BJ (cell line): ENCODE measurements at regions of chr3 and their contacts with region 1.

Region 1: DNA sequence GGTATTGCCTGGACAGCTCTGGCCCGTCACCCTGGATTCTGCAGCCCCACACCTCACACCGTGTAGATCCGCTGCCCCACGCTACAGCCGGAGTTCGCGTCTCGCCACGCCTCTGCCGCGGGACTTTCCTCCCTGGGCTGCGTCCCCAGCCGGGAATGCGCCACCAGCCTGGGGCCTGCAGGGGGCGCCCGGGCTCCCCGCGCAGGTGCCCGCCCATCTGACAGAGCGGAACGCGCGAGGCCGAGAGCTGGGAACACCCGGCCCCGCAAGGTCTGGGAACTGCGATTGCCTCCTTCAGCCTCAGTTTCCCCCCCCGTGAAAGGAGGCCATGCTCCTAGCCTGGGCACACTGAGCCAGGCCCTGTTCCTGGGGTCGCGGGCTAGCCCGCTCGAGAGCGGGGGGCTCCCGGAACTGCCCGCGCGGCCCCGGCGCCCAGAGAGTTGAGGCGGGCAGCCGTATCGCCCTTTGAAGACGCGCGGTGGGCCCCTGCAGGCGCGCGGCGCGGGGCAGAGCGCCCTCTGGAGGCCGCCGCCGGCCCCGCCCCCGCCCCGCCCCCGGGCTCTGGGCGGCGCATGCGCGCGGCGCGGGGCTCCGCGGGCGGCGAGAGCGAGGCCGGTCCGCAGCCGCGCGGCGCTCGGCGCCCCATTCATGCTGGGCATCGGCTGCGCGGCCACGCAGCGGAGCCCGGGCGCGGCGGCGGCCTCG is at the start of gene PLXNA1:
- DNase-seq: no peak
- H3K4me3 ChIP-seq: peak within 1 kb of the TSS; percentile 83
- H3K27me3 ChIP-seq: no peaks in the 10 kb centered on the region
- CTCF ChIP-seq: peak; percentile 92
- polyA plus RNA-seq, gene PLXNA1: 34.7 and 57.2 TPM in 2 replicates

Region 2: GRCh38 chr3:126746395-126747177 is 236.0 kb before region 1 on chr3:
- CTCF ChIA-PET with region 1: interaction called, 81 read pairs
- POLR2A ChIA-PET with region 1: no interaction called
- DNase-seq: peak; percentile 7
- H3K4me3 ChIP-seq: no peak overlapping the region
- H3K27me3 ChIP-seq: no peaks in the 10 kb centered on the region
- CTCF ChIP-seq: peak; percentile 24; the same call in 1 of the 2 replicates

Region 3: GRCh38 chr3:126971891-126972351 is 10.7 kb before region 1 on chr3:
- CTCF ChIA-PET with region 1: interaction called, 19 read pairs
- POLR2A ChIA-PET with region 1: interaction called, 3 read pairs
- DNase-seq: no peak
- H3K4me3 ChIP-seq: no peak overlapping the region
- H3K27me3 ChIP-seq: no peaks in the 10 kb centered on the region; the same call in 1 of the 2 replicates
- CTCF ChIP-seq: no peak

Region 4: GRCh38 chr3:127002195-127003174 is 19.9 kb after region 1 on chr3:
- CTCF ChIA-PET with region 1: interaction called, 22 read pairs
- POLR2A ChIA-PET with region 1: no interaction called
- DNase-seq: peak; percentile 68
- H3K4me3 ChIP-seq: peak overlapping the region; percentile 9; the same call in 1 of the 2 replicates
- H3K27me3 ChIP-seq: no peaks in the 10 kb centered on the region
- CTCF ChIP-seq: peak; percentile 72

Region 5: GRCh38 chr3:127019449-127019848 is 36.8 kb after region 1 on chr3:
- CTCF ChIA-PET with region 1: no interaction called
- POLR2A ChIA-PET with region 1: no interaction called
- DNase-seq: no peak
- H3K4me3 ChIP-seq: no peak overlapping the region
- H3K27me3 ChIP-seq: no peaks in the 10 kb centered on the region
- CTCF ChIP-seq: no peak

Region 6: DNA sequence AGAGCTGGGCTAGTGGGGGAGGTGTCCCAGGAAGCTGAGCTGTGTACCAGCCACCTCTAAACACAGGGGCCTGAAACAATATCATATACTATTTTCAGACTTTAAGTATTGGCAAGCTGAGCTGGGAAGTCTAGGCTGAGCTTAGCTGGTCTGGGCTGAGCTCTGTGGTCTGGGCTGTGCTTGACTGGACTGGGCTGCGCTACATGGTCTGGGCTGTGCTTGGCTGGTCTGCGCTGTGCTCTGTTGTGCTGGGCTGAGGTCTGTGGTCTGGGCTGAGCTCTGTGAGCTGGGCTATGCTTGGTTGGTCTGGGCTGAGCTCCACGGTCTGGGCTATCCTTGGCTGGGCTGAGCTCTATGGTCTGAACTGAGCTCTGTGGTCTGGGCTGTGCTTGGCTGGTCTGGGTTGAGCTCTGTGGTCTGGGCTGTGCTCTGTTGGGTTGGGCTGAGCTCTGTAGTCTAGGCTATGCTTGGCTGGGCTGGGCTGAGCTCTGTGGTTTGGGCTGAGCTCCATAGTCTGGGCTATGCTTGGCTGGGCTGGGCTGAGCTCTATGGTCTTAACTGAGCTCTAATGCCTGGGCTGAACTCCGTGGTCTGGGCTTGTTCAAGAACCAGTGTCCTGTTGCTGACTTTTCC is 92.2 kb after region 1 on chr3:
- CTCF ChIA-PET with region 1: no interaction called
- POLR2A ChIA-PET with region 1: no interaction called
- DNase-seq: peak; percentile 14
- H3K4me3 ChIP-seq: no peak overlapping the region
- H3K27me3 ChIP-seq: peaks cover 11% of the 10 kb centered on the region
- CTCF ChIP-seq: no peak